ENCODE measurements at regions of chr12 and their contacts with region 1.

Region 1: GRCh38 chr12:95998611-95999286 is 2.6 kb upstream of the HAL start:
- DNase-seq: peak in 1 of 2 donors; percentile 16
- ATAC-seq: peak; percentile 89

Region 2: DNA sequence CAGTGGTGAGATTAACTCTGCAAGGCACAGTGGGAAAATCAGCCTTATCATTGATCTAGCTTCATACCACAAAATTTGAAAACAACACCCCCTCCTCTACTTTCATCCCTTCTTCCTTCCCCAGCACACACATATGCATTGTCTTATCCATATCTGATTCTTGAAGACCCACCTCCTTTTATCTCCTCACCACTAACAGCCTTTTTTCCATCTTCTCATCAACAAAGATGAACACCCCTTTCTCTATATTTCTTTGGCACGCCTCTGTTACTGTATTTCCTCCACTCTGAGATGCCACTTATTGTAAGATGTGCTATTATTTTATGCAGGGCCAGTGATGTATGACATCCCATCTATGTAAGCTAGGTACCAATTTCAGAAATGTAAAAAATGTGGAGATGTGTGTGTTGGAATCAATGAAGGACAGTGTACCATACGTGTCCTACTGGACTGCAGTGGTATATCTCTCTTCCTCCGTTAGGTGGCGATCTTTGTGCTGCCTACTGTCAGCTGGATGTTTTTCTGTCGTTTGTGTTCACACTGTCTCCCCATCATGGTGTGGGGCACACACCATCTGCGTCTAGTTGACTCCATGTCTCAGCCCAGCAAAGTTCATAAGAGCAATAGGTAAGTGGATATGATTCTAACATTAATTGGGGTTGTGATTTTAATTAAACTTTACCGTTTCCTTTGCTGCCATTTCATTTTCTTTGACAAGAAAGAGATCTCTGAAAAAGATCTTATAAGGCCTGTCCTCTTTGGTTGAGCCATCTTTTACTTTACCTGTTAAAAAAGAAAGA is 80.4 kb before region 1 on chr12:
- intact Hi-C with region 1: loop called in 1 of 2 experiments (anchors 5 kb)
- DNase-seq: peak; percentile 10 to 23
- ATAC-seq: peak; percentile 78

Region 3: GRCh38 chr12:96054244-96054610 is 55.5 kb after region 1 on chr12:
- intact Hi-C with region 1: no loop called
- DNase-seq: no peak
- ATAC-seq: no peak

Measured in left colon (tissue), 2 donors.